ENCODE measurements at regions of chr6 and their contacts with region 1.

Region 1: GRCh38 chr6:106444777-106445507 is 84.4 kb downstream of the CRYBG1 start:
- DNase-seq: peak; percentile 64
- CTCF ChIP-seq: peak; percentile 70

Region 2: DNA sequence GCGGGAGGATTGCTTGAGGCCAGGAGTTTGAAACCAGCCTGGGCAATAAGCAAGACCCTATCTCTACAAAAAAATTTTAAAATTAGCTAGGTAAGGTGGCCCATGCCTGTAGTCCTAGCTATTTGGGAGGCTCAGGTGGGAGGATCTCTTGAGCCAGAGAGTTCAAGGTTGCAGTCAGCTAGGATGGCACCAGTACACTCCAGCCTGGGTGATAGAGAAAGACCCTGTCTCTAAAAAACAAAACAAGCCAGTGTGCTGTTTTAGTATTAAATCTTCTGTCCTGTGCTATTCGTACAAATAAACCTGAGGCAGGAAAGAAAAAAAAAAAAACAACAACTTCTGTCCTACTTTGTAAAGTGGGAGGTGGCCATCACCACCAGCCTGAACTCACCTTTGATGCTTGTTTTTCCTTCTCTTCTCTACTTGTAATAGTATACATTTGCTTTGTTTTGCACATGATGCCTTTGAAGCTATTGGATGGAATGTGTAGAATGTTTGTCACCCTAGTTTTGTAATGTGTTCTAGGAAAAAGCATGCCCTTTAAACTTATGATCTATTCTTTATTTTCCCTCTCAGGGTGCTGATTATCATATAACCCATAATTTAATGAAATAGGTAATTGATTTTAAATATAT is 18.1 kb after region 1 on chr6:
- CTCF ChIA-PET with region 1: interaction called, 10 read pairs
- POLR2A ChIA-PET with region 1: no interaction called
- DNase-seq: no peak
- CTCF ChIP-seq: no peak

Region 3: GRCh38 chr6:106574741-106575458 is 130.0 kb after region 1 on chr6:
- CTCF ChIA-PET with region 1: interaction called, 292 read pairs
- POLR2A ChIA-PET with region 1: no interaction called
- DNase-seq: no peak
- CTCF ChIP-seq: no peak

Region 4: DNA sequence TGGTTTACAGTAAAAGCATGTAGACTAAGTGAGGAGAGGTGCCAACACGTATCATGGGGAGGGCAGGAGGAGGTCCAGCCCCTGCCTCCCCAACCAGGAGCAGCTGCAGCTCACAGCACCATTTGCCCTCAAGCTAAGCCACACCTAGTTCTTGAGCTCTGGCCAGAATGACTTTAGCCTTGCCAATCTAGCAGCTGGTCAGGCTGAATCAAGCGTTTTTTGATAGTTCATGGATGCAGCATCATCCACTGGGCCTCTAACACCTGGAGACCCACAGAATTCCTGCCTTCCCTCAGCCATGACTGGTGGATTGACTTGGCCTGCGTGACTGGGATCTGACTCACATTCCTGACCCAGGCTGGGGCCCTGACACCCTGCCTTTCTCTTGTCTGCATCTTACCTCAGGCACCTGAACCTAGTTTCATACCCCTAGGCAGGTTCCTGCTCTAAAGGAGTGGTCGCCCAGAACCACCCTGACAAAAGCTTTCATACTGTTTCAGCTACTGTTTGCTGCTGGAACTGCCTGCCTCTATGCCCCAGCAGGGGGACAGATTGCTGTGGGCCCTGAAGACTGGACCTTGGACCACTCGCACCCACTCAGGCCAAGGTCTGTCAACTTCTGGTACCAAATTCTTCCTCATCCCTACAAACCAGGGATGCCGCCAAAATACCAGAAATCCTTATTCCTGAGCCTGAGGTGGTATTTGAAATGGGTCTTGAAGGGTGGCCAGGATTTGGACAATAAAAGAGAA is 306.7 kb after region 1 on chr6:
- CTCF ChIA-PET with region 1: no interaction called
- POLR2A ChIA-PET with region 1: no interaction called
- DNase-seq: no peak
- CTCF ChIP-seq: no peak